IMR-90 (cell line): ENCODE measurements at regions of chr2 and their contacts with region 1.

Region 1: GRCh38 chr2:46434851-46435273 is 44.5 kb upstream of the TMEM247 start:
- DNase-seq: peak; percentile 97
- ATAC-seq: peak; percentile 97
- H3K4me3 ChIP-seq: no peak overlapping the region
- H3K27ac ChIP-seq: peak overlapping the region; percentile 100; the same call in 1 of the 2 replicates
- H3K4me1 ChIP-seq: peaks cover 22% of the 10 kb centered on the region
- H3K27me3 ChIP-seq: no peaks in the 10 kb centered on the region
- CTCF ChIP-seq: no peak
- POLR2A ChIP-seq: no peak
- RAD21 ChIP-seq: no peak

Region 2: DNA sequence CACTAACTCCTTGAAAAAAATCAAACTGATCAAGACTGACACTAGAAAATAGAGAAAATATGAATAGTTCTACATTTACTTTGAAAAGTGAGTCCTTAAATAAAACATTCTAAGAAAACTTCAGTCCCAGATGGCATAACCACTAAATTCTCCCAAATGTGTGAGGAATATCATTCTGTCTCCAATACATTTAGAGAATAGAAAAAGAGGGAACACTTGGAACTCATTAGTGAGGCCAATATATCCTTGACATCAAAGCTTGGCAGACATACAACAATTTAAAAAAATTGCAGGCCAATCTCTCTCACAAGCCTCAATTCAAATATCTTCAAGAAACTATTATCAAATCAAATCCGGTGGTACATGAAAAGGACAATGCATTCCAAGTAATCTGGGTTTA is 34.8 kb before region 1 on chr2:
- CTCF ChIA-PET with region 1: no interaction called
- POLR2A ChIA-PET with region 1: no interaction called
- dilution Hi-C with region 1: no loop called
- in situ Hi-C with region 1: no loop called
- intact Hi-C with region 1: loop called (anchors 5 kb)
- DNase-seq: no peak
- ATAC-seq: no peak
- H3K4me3 ChIP-seq: no peak overlapping the region
- H3K27ac ChIP-seq: no peak overlapping the region
- H3K4me1 ChIP-seq: no peaks in the 10 kb centered on the region
- H3K27me3 ChIP-seq: no peaks in the 10 kb centered on the region
- CTCF ChIP-seq: no peak
- POLR2A ChIP-seq: no peak
- RAD21 ChIP-seq: no peak

Region 3: GRCh38 chr2:46535360-46535759 is 100.5 kb after region 1 on chr2:
- CTCF ChIA-PET with region 1: no interaction called
- POLR2A ChIA-PET with region 1: no interaction called
- dilution Hi-C with region 1: no loop called
- in situ Hi-C with region 1: no loop called
- intact Hi-C with region 1: no loop called
- DNase-seq: no peak
- ATAC-seq: no peak
- H3K4me3 ChIP-seq: no peak overlapping the region
- H3K27ac ChIP-seq: no peak overlapping the region
- H3K4me1 ChIP-seq: peaks cover 6% of the 10 kb centered on the region
- H3K27me3 ChIP-seq: no peaks in the 10 kb centered on the region
- CTCF ChIP-seq: no peak
- POLR2A ChIP-seq: no peak
- RAD21 ChIP-seq: no peak